GM12878 (cell line): ENCODE measurements at regions of chr19 and their contacts with region 1.

Region 1: DNA sequence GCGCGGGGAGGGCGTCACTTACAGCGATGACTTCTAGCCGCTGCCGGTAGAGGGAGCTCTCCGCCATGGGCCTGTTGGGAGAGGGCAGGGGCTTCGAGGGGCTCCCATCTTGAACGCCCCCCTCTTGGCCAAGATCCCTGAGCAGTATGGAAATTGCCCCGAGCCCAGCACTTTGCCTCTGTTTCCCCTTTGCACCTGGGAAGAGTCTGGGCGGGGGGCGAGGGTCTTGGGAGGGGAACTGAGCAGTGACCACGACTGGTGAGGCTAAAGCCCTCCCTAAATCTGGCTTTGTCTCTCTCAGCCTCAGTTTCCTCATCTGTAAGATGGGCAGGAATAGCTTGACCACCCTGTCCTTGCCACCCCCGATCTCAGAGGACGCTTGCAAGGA is 2.8 kb downstream of the PALM3 start:
- DNase-seq: no peak
- ATAC-seq: peak; percentile 72
- H3K4me3 ChIP-seq: no peak overlapping the region
- H3K27ac ChIP-seq: no peak overlapping the region
- H3K4me1 ChIP-seq: no peaks in the 10 kb centered on the region
- H3K27me3 ChIP-seq: peaks cover 0 to 6% of the 10 kb centered on the region in 2 experiments
- CTCF ChIP-seq: peak; percentile 63 to 87 (median 75)
- EP300 ChIP-seq: no peak
- POLR2A ChIP-seq: no peak
- RAD21 ChIP-seq: peak; percentile 36; the same call in 1 of the 2 replicates

Region 2: GRCh38 chr19:14015524-14016035 is 43.5 kb before region 1 on chr19:
- CTCF ChIA-PET with region 1: interaction called, 13 read pairs
- POLR2A ChIA-PET with region 1: no interaction called
- RAD21 ChIA-PET with region 1: no interaction called
- SMC1A ChIA-PET with region 1: no interaction called
- in situ Hi-C with region 1: no loop called
- intact Hi-C with region 1: no loop called
- DNase-seq: peak; percentile 94
- ATAC-seq: peak; percentile 90
- H3K4me3 ChIP-seq: no peak overlapping the region
- H3K27ac ChIP-seq: peak overlapping the region; percentile 83
- H3K4me1 ChIP-seq: peaks cover 27% of the 10 kb centered on the region
- H3K27me3 ChIP-seq: no peaks in the 10 kb centered on the region
- CTCF ChIP-seq: no peak
- EP300 ChIP-seq: peak in 1 of 2 experiments; percentile 56; a peak in 1 of 4 replicates
- POLR2A ChIP-seq: no peak
- RAD21 ChIP-seq: no peak

Region 3: GRCh38 chr19:14048443-14049153 is 10.5 kb before region 1 on chr19:
- CTCF ChIA-PET with region 1: interaction called, 60 read pairs
- POLR2A ChIA-PET with region 1: interaction called, 4 read pairs
- RAD21 ChIA-PET with region 1: interaction called, 4 read pairs
- SMC1A ChIA-PET with region 1: interaction called, 8 read pairs
- in situ Hi-C with region 1: no loop called
- intact Hi-C with region 1: no loop called
- DNase-seq: no peak
- ATAC-seq: peak; percentile 87
- H3K4me3 ChIP-seq: no peak overlapping the region
- H3K27ac ChIP-seq: no peak overlapping the region
- H3K4me1 ChIP-seq: no peaks in the 10 kb centered on the region
- H3K27me3 ChIP-seq: no peaks in the 10 kb centered on the region
- CTCF ChIP-seq: peak; percentile 73 to 95 (median 92)
- EP300 ChIP-seq: no peak
- POLR2A ChIP-seq: no peak
- RAD21 ChIP-seq: peak; percentile 57

Region 4: DNA sequence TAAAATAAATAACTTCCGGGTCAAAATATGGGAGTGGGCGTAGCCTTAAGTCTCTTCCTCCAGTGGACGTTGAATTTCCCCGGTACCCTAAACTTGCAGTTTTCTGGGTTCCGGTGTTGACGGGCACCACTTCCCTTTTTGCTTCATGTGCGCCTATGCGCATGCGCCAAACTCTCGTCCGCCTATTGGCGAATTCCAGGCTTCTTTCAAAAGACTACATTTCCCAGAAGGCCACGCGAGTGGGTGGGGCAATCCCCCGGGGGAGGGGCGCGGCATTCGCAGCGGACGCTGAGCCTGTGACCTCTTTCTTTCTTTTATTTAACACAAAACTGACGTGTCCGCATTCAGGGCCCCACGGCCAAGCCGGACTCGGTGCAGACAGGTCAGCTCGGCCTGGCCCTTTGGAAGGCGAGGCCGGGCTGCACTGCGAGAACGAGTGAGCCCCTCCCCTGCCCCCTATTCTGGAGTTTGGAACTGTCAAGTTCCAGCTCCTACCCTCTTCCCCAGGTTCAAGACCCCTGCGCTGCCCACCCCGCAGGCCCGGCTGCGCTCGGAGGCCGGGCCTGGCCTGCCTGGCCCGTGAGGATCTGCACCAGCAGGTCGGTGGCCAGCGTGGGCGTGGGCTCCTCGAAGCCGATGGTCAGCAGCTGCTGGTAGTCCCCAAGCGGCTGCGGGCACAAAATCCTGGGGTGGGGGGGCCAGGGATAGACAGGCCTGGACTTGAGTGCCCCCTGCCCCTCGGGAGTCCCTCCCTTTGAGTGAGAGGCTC is 22.4 kb after region 1 on chr19:
- CTCF ChIA-PET with region 1: interaction called, 16 read pairs
- POLR2A ChIA-PET with region 1: no interaction called
- RAD21 ChIA-PET with region 1: no interaction called
- SMC1A ChIA-PET with region 1: no interaction called
- in situ Hi-C with region 1: no loop called
- intact Hi-C with region 1: no loop called
- DNase-seq: peak; percentile 99
- ATAC-seq: peak; percentile 94
- H3K4me3 ChIP-seq: peak overlapping the region; percentile 83
- H3K27ac ChIP-seq: peak overlapping the region; percentile 86
- H3K4me1 ChIP-seq: peaks cover 4% of the 10 kb centered on the region; the same call in 1 of the 2 replicates
- H3K27me3 ChIP-seq: no peaks in the 10 kb centered on the region
- CTCF ChIP-seq: no peak
- EP300 ChIP-seq: peak in 1 of 2 experiments; percentile 9; a peak in 1 of 4 replicates
- POLR2A ChIP-seq: peak; percentile 81
- RAD21 ChIP-seq: no peak

Region 5: GRCh38 chr19:14097532-14098151 is 38.6 kb after region 1 on chr19:
- CTCF ChIA-PET with region 1: no interaction called
- POLR2A ChIA-PET with region 1: no interaction called
- RAD21 ChIA-PET with region 1: no interaction called
- SMC1A ChIA-PET with region 1: no interaction called
- in situ Hi-C with region 1: no loop called
- intact Hi-C with region 1: no loop called
- DNase-seq: no peak
- ATAC-seq: no peak
- H3K4me3 ChIP-seq: no peak overlapping the region
- H3K27ac ChIP-seq: no peak overlapping the region
- H3K4me1 ChIP-seq: no peaks in the 10 kb centered on the region
- H3K27me3 ChIP-seq: no peaks in the 10 kb centered on the region
- CTCF ChIP-seq: no peak
- EP300 ChIP-seq: no peak
- POLR2A ChIP-seq: no peak
- RAD21 ChIP-seq: no peak

Region 6: GRCh38 chr19:14117668-14118164 is 58.6 kb after region 1 on chr19 and contains the start of gene PRKACA:
- CTCF ChIA-PET with region 1: interaction called, 31 read pairs
- POLR2A ChIA-PET with region 1: interaction called, 3 read pairs
- RAD21 ChIA-PET with region 1: interaction called, 4 read pairs
- SMC1A ChIA-PET with region 1: no interaction called
- in situ Hi-C with region 1: no loop called
- intact Hi-C with region 1: no loop called
- DNase-seq: peak; percentile 91
- ATAC-seq: peak; percentile 99
- H3K4me3 ChIP-seq: peak within 1 kb of the TSS; percentile 70
- H3K27ac ChIP-seq: peak within 1 kb of the TSS; percentile 45
- H3K4me1 ChIP-seq: peaks cover 16% of the 10 kb centered on the region
- H3K27me3 ChIP-seq: no peaks in the 10 kb centered on the region
- CTCF ChIP-seq: no peak
- EP300 ChIP-seq: no peak
- POLR2A ChIP-seq: peak; percentile 54; the same call in 1 of the 2 replicates
- RAD21 ChIP-seq: no peak
- polyA plus RNA-seq, gene PRKACA: 0.53 to 1.3 TPM

Region 7: GRCh38 chr19:14150770-14151661 is 91.9 kb after region 1 on chr19:
- CTCF ChIA-PET with region 1: no interaction called
- POLR2A ChIA-PET with region 1: no interaction called
- RAD21 ChIA-PET with region 1: no interaction called
- SMC1A ChIA-PET with region 1: no interaction called
- in situ Hi-C with region 1: no loop called
- intact Hi-C with region 1: no loop called
- DNase-seq: no peak
- ATAC-seq: no peak
- H3K4me3 ChIP-seq: no peak overlapping the region
- H3K27ac ChIP-seq: no peak overlapping the region
- H3K4me1 ChIP-seq: peaks cover 6% of the 10 kb centered on the region; the same call in 1 of the 2 replicates
- H3K27me3 ChIP-seq: no peaks in the 10 kb centered on the region
- CTCF ChIP-seq: no peak
- EP300 ChIP-seq: no peak
- POLR2A ChIP-seq: no peak
- RAD21 ChIP-seq: no peak